PC-3 (cell line): ENCODE measurements at regions of chr1 and their contacts with region 1.

Region 1: DNA sequence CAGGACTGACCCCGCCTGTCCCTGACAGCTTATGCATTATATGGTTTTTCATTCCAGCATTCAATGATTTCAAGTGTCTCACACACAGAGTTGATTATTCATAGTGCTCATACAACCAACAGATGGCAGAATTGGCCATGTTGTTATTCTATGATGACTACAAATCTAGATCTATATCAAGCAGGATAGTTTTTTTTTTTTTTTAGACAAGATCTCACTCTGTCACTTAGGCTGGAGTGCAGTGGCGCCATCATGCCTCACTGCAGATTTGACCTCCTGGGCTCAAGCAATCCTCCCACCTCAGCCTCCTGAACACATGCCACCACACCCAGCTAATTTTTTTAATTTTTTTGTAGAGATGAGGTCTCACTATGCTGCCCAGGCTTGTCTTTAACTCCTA is 40.1 kb upstream of the LRRC8D start:
- DNase-seq: peak; percentile 76
- ATAC-seq: peak; percentile 94
- H3K4me3 ChIP-seq: no peak overlapping the region
- H3K27ac ChIP-seq: no peak overlapping the region
- H3K4me1 ChIP-seq: no peaks in the 10 kb centered on the region
- H3K27me3 ChIP-seq: no peaks in the 10 kb centered on the region
- CTCF ChIP-seq: peak; percentile 81

Region 2: DNA sequence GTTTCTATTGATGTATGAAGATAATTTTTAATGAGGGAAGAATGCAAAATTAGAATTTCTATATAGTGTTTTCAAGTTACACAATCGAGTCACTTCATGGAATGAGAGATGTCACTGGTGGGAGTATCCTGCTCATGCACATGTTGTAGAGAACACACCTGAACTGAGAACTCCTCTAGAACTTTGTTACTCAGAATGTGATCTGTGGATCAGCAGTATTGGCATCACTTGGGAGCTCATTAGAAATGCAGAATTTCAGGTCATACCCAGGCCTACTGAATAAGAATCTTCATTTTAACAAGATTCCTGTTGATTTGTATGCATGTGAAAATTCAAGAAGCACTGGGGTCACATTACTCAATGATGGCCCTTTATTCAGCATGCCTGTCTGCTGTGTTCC is 243.0 kb after region 1 on chr1:
- CTCF ChIA-PET with region 1: no interaction called
- POLR2A ChIA-PET with region 1: no interaction called
- intact Hi-C with region 1: loop called (anchors 1 kb)
- DNase-seq: no peak
- ATAC-seq: no peak
- H3K4me3 ChIP-seq: no peak overlapping the region
- H3K27ac ChIP-seq: no peak overlapping the region
- H3K4me1 ChIP-seq: peaks cover 10% of the 10 kb centered on the region; the same call in 1 of the 2 replicates
- H3K27me3 ChIP-seq: no peaks in the 10 kb centered on the region
- CTCF ChIP-seq: no peak

Region 3: GRCh38 chr1:90100566-90100965 is 319.8 kb after region 1 on chr1:
- CTCF ChIA-PET with region 1: no interaction called
- POLR2A ChIA-PET with region 1: no interaction called
- intact Hi-C with region 1: loop called (anchors 10 kb)
- DNase-seq: no peak
- ATAC-seq: no peak
- H3K4me3 ChIP-seq: no peak overlapping the region
- H3K27ac ChIP-seq: no peak overlapping the region
- H3K4me1 ChIP-seq: no peaks in the 10 kb centered on the region
- H3K27me3 ChIP-seq: peaks cover 22% of the 10 kb centered on the region
- CTCF ChIP-seq: no peak